Right lobe of liver (tissue), 6 donors: ENCODE measurements at regions of chr1 and their contacts with region 1.

Region 1: DNA sequence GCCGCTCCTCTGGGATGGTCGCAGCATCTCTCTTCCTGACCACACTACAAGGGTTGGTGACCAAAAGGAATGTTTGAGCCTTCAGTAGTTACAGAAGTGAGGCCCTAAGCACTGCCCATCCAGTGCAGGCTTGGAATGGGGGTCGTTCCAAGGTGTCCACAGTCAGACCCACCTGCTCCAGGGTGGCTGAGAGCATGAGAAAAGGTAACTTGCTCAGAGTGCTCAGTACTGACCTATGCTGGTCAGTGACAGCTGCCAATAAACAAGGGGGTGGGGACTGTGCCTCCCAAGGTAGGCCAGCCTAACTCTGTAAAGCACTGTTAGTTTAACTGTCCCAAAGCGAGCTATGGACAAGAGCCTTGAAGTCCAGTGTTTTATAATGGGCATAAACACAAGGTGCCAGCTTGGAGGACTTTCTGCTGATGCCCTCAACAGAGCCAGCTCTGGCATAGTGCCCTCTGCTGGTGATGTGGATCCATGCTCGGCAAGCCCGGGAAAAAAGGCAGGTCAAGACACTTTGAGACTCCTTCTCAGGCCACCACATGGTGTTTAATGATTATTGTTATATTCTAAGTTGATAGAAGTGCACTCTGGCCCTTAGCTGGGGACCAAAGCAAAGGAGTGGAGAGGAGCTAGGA is 78.1 kb upstream of the DNAH14 start:
- DNase-seq: peak; percentile 76 to 78 (median 78)
- ATAC-seq: peak; percentile 90 to 95 (median 92)
- H3K4me3 ChIP-seq: no peak overlapping the region
- H3K27ac ChIP-seq: no peak overlapping the region
- H3K4me1 ChIP-seq: no peaks in the 10 kb centered on the region
- H3K27me3 ChIP-seq: no peaks in the 10 kb centered on the region
- CTCF ChIP-seq: peak; percentile 68 to 83 (median 81)
- POLR2A ChIP-seq: no peak

Region 2: GRCh38 chr1:224519874-224520273 is 331.5 kb before region 1 on chr1:
- intact Hi-C with region 1: loop called in 1 of 2 experiments (anchors 5 kb)
- DNase-seq: no peak
- ATAC-seq: no peak
- H3K4me3 ChIP-seq: no peak overlapping the region
- H3K27ac ChIP-seq: no peak overlapping the region
- H3K4me1 ChIP-seq: no peaks in the 10 kb centered on the region
- H3K27me3 ChIP-seq: no peaks in the 10 kb centered on the region
- CTCF ChIP-seq: no peak
- POLR2A ChIP-seq: no peak

Region 3: DNA sequence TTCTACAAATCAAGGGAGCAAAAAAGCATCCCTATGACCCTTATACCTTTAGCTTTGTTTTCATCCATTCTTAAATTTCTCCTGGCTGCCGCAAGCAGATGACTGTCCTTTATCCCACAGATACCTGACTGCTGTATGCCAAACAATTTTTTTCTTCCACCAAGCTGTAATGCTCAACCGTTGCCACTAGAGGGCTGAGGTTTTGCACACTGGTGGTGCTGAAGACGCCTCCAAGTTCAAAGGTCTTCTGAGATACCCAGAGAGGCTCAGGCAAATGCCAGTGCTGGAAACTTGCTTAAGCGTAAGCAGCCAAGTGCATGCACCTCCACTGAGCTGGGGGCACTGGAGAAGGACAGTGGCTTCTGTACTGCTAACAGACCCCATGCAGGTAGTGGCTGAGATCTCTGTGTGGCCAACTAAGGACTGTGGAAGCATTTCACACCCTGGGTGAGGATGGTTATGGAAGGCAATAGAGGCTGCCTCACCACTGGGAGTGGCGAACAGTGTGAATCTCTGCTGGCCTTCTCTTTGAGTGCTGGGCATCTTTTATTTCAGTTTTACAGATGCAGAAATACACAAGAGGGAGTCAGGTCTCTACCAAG is 206.7 kb before region 1 on chr1:
- intact Hi-C with region 1: loop called (anchors 5 to 10 kb)
- DNase-seq: peak in 1 of 3 donors; percentile 60
- ATAC-seq: peak; percentile 83 to 94 (median 89)
- H3K4me3 ChIP-seq: no peak overlapping the region
- H3K27ac ChIP-seq: no peak overlapping the region
- H3K4me1 ChIP-seq: no peaks in the 10 kb centered on the region
- H3K27me3 ChIP-seq: no peaks in the 10 kb centered on the region
- CTCF ChIP-seq: peak; percentile 79 to 86 (median 83)
- POLR2A ChIP-seq: no peak

Region 4: DNA sequence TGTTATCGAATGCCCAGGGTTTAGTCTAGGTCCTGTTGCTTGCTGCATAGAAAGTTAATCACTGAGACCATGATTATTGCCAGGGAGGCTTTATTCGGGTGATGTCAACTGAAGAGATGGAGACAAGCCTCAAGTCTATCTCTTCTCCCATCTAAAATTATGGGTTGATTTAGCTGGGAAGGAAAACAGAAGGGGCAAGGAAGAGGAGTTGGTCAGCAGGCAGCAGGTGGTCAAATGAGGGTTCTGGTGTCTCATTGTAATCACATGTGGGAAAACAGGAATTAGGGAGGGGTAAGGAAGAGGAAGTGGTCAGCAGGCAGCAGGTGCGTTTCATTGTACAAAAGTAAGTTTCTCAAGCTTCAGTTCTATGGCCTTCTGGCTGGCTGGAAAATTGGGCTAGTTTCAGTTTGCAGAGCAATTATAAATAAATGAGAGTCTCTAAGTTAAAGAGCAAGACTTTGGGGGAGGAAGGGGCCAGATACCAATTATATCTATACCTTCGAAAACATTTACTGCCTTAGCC is 68.1 kb before region 1 on chr1:
- intact Hi-C with region 1: no loop called
- DNase-seq: no peak
- ATAC-seq: no peak
- H3K4me3 ChIP-seq: no peak overlapping the region
- H3K27ac ChIP-seq: no peak overlapping the region
- H3K4me1 ChIP-seq: peaks cover 0 to 10% (median 0%) of the 10 kb centered on the region in 4 donors
- H3K27me3 ChIP-seq: no peaks in the 10 kb centered on the region
- CTCF ChIP-seq: no peak
- POLR2A ChIP-seq: no peak